Gastrocnemius medialis (tissue), 4 donors: ENCODE measurements at regions of chr5 and their contacts with region 1.

Region 1: GRCh38 chr5:139517683-139518564 is 35.4 kb upstream of the STING1 start:
- DNase-seq: peak; percentile 78 to 88
- ATAC-seq: peak; percentile 82 to 90
- H3K4me3 ChIP-seq: peak overlapping the region; percentile 58 to 79 (median 63)
- H3K27ac ChIP-seq: peak overlapping the region; percentile 83 to 95 (median 90)
- H3K4me1 ChIP-seq: peaks cover 7 to 8% of the 10 kb centered on the region in 2 donors
- H3K27me3 ChIP-seq: no peaks in the 10 kb centered on the region
- CTCF ChIP-seq: peak in 4 of 5 experiments; percentile 93 to 99 (median 98)
- POLR2A ChIP-seq: peak; percentile 36 to 54

Region 2: GRCh38 chr5:139417214-139417613 is 100.7 kb before region 1 on chr5:
- in situ Hi-C with region 1: loop called in 3 of 4 experiments (anchors 5 kb)
- intact Hi-C with region 1: loop called (anchors 1 kb)
- DNase-seq: peak; percentile 64 to 79
- ATAC-seq: peak; percentile 69 to 79
- H3K4me3 ChIP-seq: no peak overlapping the region
- H3K27ac ChIP-seq: peak overlapping the region; percentile 83 to 90 (median 87)
- H3K4me1 ChIP-seq: peaks cover 58 to 61% of the 10 kb centered on the region in 2 donors
- H3K27me3 ChIP-seq: no peaks in the 10 kb centered on the region
- CTCF ChIP-seq: no peak
- POLR2A ChIP-seq: no peak

Region 3: DNA sequence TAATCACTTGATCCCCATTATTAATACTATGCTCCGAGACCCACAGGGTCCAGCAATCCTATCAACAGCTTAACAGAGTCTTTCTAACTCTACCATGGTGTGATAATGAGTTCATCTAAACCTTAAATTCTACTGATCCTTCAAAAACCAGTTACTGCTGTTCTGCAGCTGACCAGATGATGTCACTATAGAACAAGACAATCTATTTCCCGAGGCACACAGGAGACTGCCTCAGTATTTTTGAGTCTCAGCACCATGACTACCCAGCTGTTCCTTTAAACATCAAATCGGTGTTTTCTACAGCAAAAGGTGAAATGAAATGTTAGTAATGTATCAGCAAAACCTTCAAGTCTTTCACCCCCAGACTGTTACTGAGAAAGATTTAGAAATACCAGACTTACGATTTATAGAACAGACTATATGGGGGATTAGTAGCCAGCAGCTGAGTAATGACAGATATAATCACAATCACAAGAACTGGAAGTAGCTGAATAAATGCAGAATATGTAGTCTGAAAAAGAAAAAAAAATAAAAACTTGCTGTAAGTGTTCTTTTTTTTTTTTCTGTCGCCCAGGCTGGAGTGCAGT is 95.5 kb before region 1 on chr5:
- in situ Hi-C with region 1: loop called (anchors 5 kb)
- intact Hi-C with region 1: loop called (anchors 1 kb)
- DNase-seq: no peak
- ATAC-seq: peak; percentile 53 to 74
- H3K4me3 ChIP-seq: no peak overlapping the region
- H3K27ac ChIP-seq: peak overlapping the region in 1 of 4 donors; percentile 24
- H3K4me1 ChIP-seq: peaks cover 33 to 46% of the 10 kb centered on the region in 2 donors
- H3K27me3 ChIP-seq: no peaks in the 10 kb centered on the region
- CTCF ChIP-seq: peak; percentile 61 to 82 (median 78)
- POLR2A ChIP-seq: no peak

Region 4: DNA sequence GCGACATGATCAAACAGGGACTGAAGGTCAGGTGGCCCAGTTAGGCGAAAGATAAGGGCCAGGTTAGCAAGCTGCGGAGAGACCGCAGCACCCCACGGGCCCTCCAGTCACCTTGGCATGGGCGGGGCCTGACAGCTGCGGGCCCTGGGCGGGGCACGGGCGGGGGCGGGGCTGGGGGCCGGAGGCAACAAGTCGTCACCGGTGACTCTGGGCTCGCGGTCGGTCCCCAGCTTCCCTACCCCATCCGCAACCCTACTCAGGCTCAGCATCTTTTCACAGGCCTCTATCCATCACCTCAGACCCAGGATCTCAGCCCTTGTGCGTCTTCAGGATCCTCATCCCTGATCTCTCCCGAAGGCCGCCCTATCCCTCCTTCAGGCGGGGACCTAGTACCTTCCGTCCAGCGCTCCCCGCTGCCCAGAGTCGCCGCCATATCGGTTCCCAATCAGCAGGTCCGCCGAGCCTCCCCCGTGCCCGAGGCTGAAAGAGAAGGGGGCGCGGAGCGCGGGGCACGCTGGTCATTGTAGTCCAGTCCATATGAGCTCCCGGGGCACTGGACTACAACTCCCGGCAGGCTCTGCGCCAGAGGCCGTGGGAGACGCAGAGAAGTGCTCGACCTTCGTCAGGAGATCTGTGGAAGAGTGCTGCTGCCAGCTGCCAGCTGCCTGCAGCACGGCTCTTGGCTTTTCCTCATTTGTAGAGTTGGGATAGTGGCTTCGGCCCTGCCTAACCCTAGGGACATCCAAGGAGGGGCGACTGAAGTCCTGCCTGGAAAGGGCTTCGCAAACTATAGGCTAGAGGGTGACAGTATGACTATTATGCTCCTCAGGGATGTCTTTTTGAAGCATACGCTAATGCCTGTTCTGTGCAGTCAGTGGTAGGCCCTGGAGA is 78.7 kb before region 1 on chr5 and contains the start of gene DNAJC18:
- in situ Hi-C with region 1: no loop called
- intact Hi-C with region 1: loop called (anchors 5 kb)
- DNase-seq: peak; percentile 94
- ATAC-seq: peak; percentile 98
- H3K4me3 ChIP-seq: peak within 1 kb of the TSS; percentile 90 to 97 (median 94)
- H3K27ac ChIP-seq: peak within 1 kb of the TSS; percentile 98 to 100 (median 99)
- H3K4me1 ChIP-seq: peaks cover 5 to 16% of the 10 kb centered on the region in 2 donors
- H3K27me3 ChIP-seq: no peaks in the 10 kb centered on the region
- CTCF ChIP-seq: no peak
- POLR2A ChIP-seq: peak; percentile 41 to 51
- total RNA-seq, gene DNAJC18: 5.1 to 21.7 (median 13.3) TPM

Region 5: GRCh38 chr5:139690064-139690802 is 172.3 kb after region 1 on chr5:
- in situ Hi-C with region 1: no loop called
- intact Hi-C with region 1: loop called (anchors 5 kb)
- DNase-seq: no peak
- ATAC-seq: no peak
- H3K4me3 ChIP-seq: no peak overlapping the region
- H3K27ac ChIP-seq: peak overlapping the region; percentile 35 to 98 (median 80)
- H3K4me1 ChIP-seq: peaks cover 51 to 66% of the 10 kb centered on the region in 2 donors
- H3K27me3 ChIP-seq: no peaks in the 10 kb centered on the region
- CTCF ChIP-seq: peak; percentile 48 to 80 (median 71)
- POLR2A ChIP-seq: no peak